ENCODE measurements at regions of chr18 and their contacts with region 1.

Region 1: DNA sequence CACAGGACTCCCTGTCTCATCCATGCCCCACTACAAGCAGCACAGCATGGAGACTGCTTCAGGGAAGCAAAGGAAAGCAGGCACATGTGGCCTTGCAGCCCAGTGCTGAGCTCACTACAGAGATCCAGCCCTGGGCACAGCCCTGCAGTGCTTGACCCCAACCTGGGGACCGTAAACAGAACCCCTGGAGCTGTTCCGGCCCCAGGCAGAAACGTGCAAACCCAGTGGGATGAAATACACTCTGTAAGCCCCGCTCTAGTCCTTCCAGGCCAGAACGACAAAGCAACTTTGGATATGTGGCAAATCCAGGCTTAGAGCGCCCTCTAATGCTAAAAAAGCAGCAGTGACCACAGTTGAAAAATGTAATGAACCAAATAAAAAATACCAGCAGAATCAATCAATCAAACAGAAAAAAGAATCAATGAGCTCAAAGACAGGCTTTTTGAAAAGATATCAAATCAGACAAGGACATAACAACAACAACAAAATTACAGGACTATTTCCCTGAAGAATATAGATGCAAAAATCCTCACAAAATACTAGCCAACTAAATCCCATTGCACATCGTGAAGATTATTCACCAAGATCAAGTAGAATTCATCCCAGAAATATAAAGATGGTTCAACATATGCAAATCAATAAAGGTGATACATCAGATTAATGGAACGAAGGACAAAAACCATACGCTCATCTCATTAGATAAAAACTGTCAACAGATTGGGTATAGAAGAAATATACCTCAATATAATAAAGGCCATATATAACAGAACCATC is 45.6 kb downstream of the ZNF519 start:
- DNase-seq: no peak
- H3K4me3 Mint-ChIP-seq: no peak overlapping the region
- H3K27ac Mint-ChIP-seq: no peak overlapping the region
- H3K4me1 Mint-ChIP-seq: no peaks in the 10 kb centered on the region
- H3K27me3 Mint-ChIP-seq: no peaks in the 10 kb centered on the region

Region 2: GRCh38 chr18:13813271-13813849 is 273.3 kb before region 1 on chr18:
- intact Hi-C with region 1: loop called (anchors 1 kb)
- DNase-seq: peak; percentile 29
- H3K4me3 Mint-ChIP-seq: no peak overlapping the region
- H3K27ac Mint-ChIP-seq: no peak overlapping the region
- H3K4me1 Mint-ChIP-seq: no peaks in the 10 kb centered on the region
- H3K27me3 Mint-ChIP-seq: peaks cover 4% of the 10 kb centered on the region

Region 3: GRCh38 chr18:13823707-13824395 is 262.8 kb before region 1 on chr18 and contains the start of gene MC5R:
- intact Hi-C with region 1: loop called (anchors 1 kb)
- DNase-seq: peak; percentile 50
- H3K4me3 Mint-ChIP-seq: peak within 1 kb of the TSS; percentile 33
- H3K27ac Mint-ChIP-seq: no peak within 1 kb of the TSS
- H3K4me1 Mint-ChIP-seq: no peaks in the 10 kb centered on the region
- H3K27me3 Mint-ChIP-seq: peaks cover 25% of the 10 kb centered on the region
- total RNA-seq, gene MC5R: not detected in 2 replicates